Activated CD4-positive, alpha-beta T cell treated with anti-CD3 and anti-CD28 coated beads, Interleukin-2, amount 10 ng/mL, durations not matched to agents 24 days and 14 days (primary cell): ENCODE measurements at regions of chr1 and their contacts with region 1.

Region 1: GRCh38 chr1:114716304-114717170 is at the start of gene NRAS:
- DNase-seq: peak; percentile 99
- H3K4me3 Mint-ChIP-seq: peak within 1 kb of the TSS; percentile 95
- H3K27ac Mint-ChIP-seq: peak within 1 kb of the TSS; percentile 93
- H3K4me1 Mint-ChIP-seq: peaks cover 20% of the 10 kb centered on the region
- H3K27me3 Mint-ChIP-seq: no peaks in the 10 kb centered on the region
- total RNA-seq, gene NRAS: 60.7 and 61.4 TPM in 2 replicates

Region 2: DNA sequence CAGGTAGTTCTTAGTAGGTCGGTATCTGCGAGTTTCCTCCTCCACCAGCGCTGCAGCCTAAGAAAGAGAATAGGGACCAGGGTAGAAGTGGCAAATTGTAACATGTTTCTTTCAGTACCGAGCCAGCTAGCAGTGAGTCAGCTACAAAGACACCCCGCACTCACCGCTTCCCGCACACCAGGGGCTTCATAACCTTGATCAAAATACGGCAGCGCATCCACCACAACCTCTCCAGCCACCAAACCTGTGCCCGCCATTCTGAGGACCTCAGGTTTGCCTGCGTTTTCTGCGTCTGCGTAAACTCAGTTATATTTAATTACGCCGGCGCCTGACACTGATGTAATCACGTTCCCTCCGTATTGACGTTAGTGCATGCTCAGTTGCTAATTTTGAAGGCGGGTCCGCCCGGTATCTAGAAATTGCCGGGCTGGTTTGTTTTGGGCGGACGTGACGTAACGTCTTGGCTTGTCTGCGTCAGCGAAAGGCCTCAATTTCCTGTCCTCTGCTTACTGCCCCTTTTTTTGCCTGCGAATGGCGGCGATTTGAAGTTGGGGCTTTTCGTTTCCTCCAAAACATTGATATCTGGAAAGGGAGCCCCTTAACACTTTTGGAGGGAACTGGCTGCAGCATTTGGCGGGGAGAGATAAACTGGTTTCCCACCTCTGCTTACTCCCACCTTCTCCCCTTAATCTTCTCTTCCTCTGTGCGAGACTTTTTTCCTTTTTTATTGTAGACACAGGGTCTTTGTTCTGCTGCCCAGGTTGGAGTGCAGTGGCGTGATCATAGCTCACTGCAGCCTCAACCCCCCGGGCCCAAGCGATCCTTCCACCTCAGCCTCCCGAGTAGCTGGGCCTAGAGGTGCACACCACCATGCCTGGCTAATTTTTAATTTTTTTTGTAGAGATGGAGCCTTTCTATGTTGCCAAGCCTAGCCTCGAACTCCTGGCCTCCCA is 134.9 kb before region 1 on chr1 and contains the start of gene BCAS2:
- intact Hi-C with region 1: loop called (anchors 1 kb)
- DNase-seq: peak; percentile 98
- H3K4me3 Mint-ChIP-seq: peak within 1 kb of the TSS; percentile 95
- H3K27ac Mint-ChIP-seq: peak within 1 kb of the TSS; percentile 93
- H3K4me1 Mint-ChIP-seq: peaks cover 19% of the 10 kb centered on the region
- H3K27me3 Mint-ChIP-seq: peaks cover 9% of the 10 kb centered on the region
- total RNA-seq, gene BCAS2: 63.5 and 64.0 TPM in 2 replicates

Region 3: DNA sequence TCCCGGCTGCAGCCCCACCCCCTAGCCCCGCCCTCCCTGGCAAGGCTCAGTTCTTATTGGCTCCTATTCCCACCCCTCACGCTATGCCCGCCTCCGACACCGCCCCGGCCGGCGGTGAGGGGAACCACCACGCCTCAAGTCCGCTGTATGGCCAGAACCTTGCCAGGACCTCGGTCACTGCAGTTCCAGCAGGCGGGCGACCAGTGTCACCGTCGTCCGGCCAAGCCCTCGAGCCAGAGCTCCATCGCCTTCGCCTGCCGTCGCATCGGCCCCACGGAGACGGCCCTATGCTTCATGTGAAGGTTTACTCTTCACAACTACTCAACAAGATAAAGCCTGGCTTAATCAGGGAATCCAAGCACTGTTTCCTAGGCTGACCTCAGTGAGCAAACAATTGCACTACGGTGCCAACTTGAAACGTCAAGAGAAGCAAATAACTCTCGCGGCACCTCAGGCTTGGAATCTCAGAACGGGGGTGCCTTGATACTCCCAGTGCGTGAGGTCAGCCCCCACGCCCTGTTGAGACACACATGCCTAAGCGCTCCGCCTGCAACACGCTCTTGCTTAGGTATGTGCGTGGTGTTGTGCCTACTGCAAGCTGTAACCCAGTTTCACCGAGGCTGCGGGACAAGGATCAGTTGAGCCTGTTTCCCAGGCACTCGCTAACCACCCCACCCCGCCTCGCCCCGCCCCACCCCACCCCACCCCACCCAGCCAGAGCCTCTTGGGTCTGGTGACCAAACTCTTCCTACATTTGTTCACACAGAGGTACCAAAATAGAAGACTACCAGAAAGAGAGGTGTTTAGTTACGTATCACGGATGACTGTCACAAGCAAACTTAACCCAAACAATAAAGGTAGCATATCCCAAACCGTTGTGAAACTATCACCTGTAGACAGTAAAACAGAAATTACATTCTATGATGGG is 46.2 kb before region 1 on chr1:
- intact Hi-C with region 1: loop called (anchors 1 kb)
- DNase-seq: peak; percentile 94
- H3K4me3 Mint-ChIP-seq: peak overlapping the region; percentile 94
- H3K27ac Mint-ChIP-seq: peak overlapping the region; percentile 25
- H3K4me1 Mint-ChIP-seq: peaks cover 10% of the 10 kb centered on the region
- H3K27me3 Mint-ChIP-seq: peaks cover 52% of the 10 kb centered on the region

Region 4: DNA sequence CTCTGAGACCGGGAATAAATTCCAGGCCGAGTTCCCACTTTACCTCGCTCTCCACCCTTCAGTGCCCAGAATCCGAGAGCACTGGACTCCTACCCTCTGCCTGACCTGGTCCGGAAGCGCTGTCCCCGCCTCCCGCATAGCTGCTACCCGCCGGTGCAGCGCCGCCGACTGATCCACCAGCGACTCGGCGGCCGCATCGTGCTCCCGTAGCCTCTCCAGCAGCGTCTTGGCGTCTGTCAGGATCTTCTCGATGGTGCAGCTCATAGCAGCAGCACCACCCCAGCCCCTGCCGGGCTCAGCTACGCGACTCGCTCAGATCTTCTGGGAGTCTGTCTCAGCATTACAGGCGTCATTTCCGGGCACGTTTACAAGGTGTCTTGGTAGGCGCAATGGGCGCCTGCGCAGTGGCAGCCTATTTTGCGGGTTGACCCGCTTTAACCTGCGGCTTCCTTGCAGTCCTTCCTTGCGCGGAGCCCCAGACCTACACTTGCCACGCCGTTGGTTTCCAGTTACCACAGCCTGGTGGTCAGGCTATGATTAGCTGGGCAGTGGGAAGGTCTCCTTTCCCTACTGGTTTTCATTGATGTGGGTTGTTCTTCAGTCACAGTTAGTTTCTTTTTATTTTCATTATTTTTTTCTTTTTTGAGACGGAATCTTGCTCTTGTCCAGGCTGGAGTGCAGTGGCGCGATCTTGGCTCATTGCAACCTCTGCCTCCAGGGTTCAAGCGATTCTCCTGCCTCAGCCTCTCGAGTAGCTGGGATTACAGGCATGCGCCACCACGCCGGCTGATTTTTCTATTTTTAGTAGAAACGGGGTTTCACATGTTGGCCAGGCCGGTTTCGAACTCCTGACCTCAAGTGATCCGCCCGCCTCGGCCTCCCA is 64.0 kb after region 1 on chr1 and contains the start of gene SIKE1:
- intact Hi-C with region 1: loop called (anchors 1 kb)
- DNase-seq: peak; percentile 98
- H3K4me3 Mint-ChIP-seq: peak within 1 kb of the TSS; percentile 100
- H3K27ac Mint-ChIP-seq: peak within 1 kb of the TSS; percentile 99
- H3K4me1 Mint-ChIP-seq: peaks cover 18% of the 10 kb centered on the region
- H3K27me3 Mint-ChIP-seq: peaks cover 8% of the 10 kb centered on the region
- total RNA-seq, gene SIKE1: 64.4 and 65.8 TPM in 2 replicates

Region 5: GRCh38 chr1:114803001-114803400 is 86.5 kb after region 1 on chr1:
- intact Hi-C with region 1: no loop called
- DNase-seq: no peak
- H3K4me3 Mint-ChIP-seq: no peak overlapping the region
- H3K27ac Mint-ChIP-seq: no peak overlapping the region
- H3K4me1 Mint-ChIP-seq: no peaks in the 10 kb centered on the region
- H3K27me3 Mint-ChIP-seq: peaks cover 9% of the 10 kb centered on the region